Activated T-helper 2 cell treated with anti-CD3 and anti-CD28 coated beads, Interferon-gamma antibody, Interleukin-2, Interleukin-4, amounts not matched to agents 10 μg/mL and 5 μg/mL and 100 μg/mL, durations not matched to agents 14 hours and 24 hours and 36 hours (primary cell): ENCODE measurements at regions of chr5 and their contacts with region 1.

Region 1: GRCh38 chr5:52693280-52693679 is 94.4 kb upstream of the ITGA1 start:
- DNase-seq: no peak
- H3K4me3 Mint-ChIP-seq: no peak overlapping the region
- H3K27ac Mint-ChIP-seq: no peak overlapping the region
- H3K4me1 Mint-ChIP-seq: peaks cover 9% of the 10 kb centered on the region
- H3K27me3 Mint-ChIP-seq: peaks cover 43% of the 10 kb centered on the region

Region 2: DNA sequence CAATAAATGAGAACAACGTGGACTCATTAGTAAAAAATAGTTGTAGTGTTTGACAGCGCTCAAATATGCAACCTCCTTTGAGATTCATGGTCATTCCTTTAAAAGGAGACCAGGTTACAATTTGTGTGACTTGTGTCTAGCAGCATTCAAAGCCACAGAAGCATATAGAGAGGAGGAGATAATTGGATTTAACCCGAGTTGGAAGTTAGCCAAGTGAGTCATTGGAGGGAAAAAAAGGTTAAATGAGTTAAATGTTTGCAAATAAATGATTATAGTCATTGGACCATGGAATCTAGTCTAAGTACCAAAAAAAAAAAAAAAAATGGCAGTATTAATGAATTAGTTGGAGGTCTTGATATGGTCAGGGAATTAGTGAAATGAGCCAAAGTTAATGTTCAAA is 185.4 kb after region 1 on chr5:
- intact Hi-C with region 1: no loop called
- DNase-seq: no peak
- H3K4me3 Mint-ChIP-seq: no peak overlapping the region
- H3K27ac Mint-ChIP-seq: no peak overlapping the region
- H3K4me1 Mint-ChIP-seq: no peaks in the 10 kb centered on the region
- H3K27me3 Mint-ChIP-seq: peaks cover 29% of the 10 kb centered on the region

Region 3: DNA sequence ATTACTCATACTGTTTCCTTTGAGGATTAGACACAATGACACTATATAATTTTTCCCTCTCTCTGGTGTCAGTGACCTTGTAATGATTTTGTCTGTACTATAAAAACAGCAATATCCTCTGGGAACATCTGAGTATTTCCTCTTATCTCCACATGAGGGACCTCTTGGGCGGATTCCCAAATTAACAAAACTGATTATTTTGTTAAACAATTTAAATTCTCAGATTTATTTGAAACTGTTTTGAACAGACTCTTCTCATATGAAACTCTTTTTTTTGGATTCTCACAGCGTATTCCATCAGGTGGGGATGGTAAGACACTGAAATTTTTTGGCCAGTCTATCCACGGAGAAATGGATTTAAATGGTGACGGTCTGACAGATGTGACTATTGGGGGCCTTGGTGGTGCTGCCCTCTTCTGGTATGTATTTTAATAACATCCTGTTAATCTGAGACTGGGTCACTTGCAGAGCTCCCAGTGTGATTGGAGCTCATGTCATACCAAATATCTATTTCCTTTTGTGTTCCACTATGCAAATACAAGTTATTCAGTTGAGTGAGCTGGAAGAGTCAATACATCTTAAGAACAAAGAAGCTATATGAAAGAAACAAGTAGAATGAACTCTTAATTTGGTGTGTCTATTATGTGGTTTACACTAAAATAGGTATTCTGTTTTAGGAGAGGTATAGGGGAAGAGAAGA is 222.0 kb after region 1 on chr5:
- intact Hi-C with region 1: loop called (anchors 1 kb)
- DNase-seq: peak; percentile 31
- H3K4me3 Mint-ChIP-seq: peak overlapping the region; percentile 34
- H3K27ac Mint-ChIP-seq: no peak overlapping the region
- H3K4me1 Mint-ChIP-seq: peaks cover 4% of the 10 kb centered on the region
- H3K27me3 Mint-ChIP-seq: peaks cover 15% of the 10 kb centered on the region